ENCODE measurements at regions of chr11 and their contacts with region 1.

Region 1: GRCh38 chr11:78533399-78533798 is 41.3 kb downstream of the NARS2 start:
- DNase-seq: no peak
- ATAC-seq: peak; percentile 67
- H3K4me3 Mint-ChIP-seq: peak overlapping the region; percentile 58
- H3K27ac Mint-ChIP-seq: peak overlapping the region; percentile 96
- H3K4me1 Mint-ChIP-seq: peaks cover 36% of the 10 kb centered on the region
- H3K27me3 Mint-ChIP-seq: no peaks in the 10 kb centered on the region
- CTCF ChIP-seq: no peak

Region 2: DNA sequence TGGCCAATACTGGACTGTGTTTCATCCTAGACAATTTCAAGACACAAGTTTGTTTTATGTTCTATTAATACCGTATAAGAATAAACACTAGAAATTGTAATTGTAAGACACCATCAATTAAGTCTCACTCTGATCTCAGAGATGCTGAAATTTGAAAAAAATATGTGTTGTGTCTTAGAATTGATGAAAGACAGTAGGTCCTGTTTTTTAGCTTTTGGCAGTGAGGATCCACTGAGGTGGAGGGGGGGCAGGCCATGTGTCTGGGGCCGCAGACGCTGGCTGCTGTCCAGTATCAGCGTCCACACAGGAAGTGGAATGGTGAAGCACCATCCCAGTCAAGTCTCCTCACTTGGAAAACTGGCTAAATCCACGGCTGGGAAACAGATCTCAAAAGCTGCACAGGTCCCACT is 371.4 kb before region 1 on chr11:
- CTCF ChIA-PET with region 1: no interaction called
- POLR2A ChIA-PET with region 1: no interaction called
- intact Hi-C with region 1: no loop called
- DNase-seq: no peak
- ATAC-seq: no peak
- H3K4me3 Mint-ChIP-seq: no peak overlapping the region
- H3K27ac Mint-ChIP-seq: no peak overlapping the region
- H3K4me1 Mint-ChIP-seq: no peaks in the 10 kb centered on the region
- H3K27me3 Mint-ChIP-seq: no peaks in the 10 kb centered on the region
- CTCF ChIP-seq: no peak

Region 3: GRCh38 chr11:78223320-78223954 is 310.0 kb before region 1 on chr11:
- CTCF ChIA-PET with region 1: interaction called, 3 read pairs
- POLR2A ChIA-PET with region 1: interaction called, 3 read pairs
- intact Hi-C with region 1: loop called (anchors 1 kb)
- DNase-seq: peak; percentile 29
- ATAC-seq: peak; percentile 82
- H3K4me3 Mint-ChIP-seq: peak overlapping the region; percentile 77
- H3K27ac Mint-ChIP-seq: peak overlapping the region; percentile 85
- H3K4me1 Mint-ChIP-seq: peaks cover 45% of the 10 kb centered on the region
- H3K27me3 Mint-ChIP-seq: no peaks in the 10 kb centered on the region
- CTCF ChIP-seq: no peak

Region 4: GRCh38 chr11:78465169-78465942 is 68.0 kb before region 1 on chr11:
- CTCF ChIA-PET with region 1: no interaction called
- POLR2A ChIA-PET with region 1: interaction called, 4 read pairs
- intact Hi-C with region 1: loop called (anchors 2 kb)
- DNase-seq: peak; percentile 35
- ATAC-seq: peak; percentile 93
- H3K4me3 Mint-ChIP-seq: peak overlapping the region; percentile 64
- H3K27ac Mint-ChIP-seq: peak overlapping the region; percentile 90
- H3K4me1 Mint-ChIP-seq: peaks cover 44% of the 10 kb centered on the region
- H3K27me3 Mint-ChIP-seq: no peaks in the 10 kb centered on the region
- CTCF ChIP-seq: no peak

Measured in activated B cell treated with CpG ODN at 0.5 μM for 24 hours (primary cell).